Activated naive CD4-positive, alpha-beta T cell treated with anti-CD3 and anti-CD28 coated beads for 36 hours (primary cell): ENCODE measurements at regions of chrX and their contacts with region 1.

Region 1: GRCh38 chrX:24682739-24683432 is 10.8 kb upstream of the POLA1 start:
- DNase-seq: peak; percentile 72
- H3K4me3 Mint-ChIP-seq: no peak overlapping the region
- H3K27ac Mint-ChIP-seq: peak overlapping the region; percentile 59
- H3K4me1 Mint-ChIP-seq: peaks cover 19% of the 10 kb centered on the region
- H3K27me3 Mint-ChIP-seq: peaks cover 6% of the 10 kb centered on the region

Region 2: GRCh38 chrX:24693453-24694202 is 10.7 kb after region 1 on chrX and contains the start of gene POLA1:
- CTCF ChIA-PET with region 1: no interaction called
- intact Hi-C with region 1: loop called (anchors 1 kb)
- DNase-seq: peak; percentile 81
- H3K4me3 Mint-ChIP-seq: peak within 1 kb of the TSS; percentile 90
- H3K27ac Mint-ChIP-seq: peak within 1 kb of the TSS; percentile 88
- H3K4me1 Mint-ChIP-seq: peaks cover 17% of the 10 kb centered on the region
- H3K27me3 Mint-ChIP-seq: no peaks in the 10 kb centered on the region
- total RNA-seq, gene POLA1: 38.2 to 38.7 TPM

Region 3: DNA sequence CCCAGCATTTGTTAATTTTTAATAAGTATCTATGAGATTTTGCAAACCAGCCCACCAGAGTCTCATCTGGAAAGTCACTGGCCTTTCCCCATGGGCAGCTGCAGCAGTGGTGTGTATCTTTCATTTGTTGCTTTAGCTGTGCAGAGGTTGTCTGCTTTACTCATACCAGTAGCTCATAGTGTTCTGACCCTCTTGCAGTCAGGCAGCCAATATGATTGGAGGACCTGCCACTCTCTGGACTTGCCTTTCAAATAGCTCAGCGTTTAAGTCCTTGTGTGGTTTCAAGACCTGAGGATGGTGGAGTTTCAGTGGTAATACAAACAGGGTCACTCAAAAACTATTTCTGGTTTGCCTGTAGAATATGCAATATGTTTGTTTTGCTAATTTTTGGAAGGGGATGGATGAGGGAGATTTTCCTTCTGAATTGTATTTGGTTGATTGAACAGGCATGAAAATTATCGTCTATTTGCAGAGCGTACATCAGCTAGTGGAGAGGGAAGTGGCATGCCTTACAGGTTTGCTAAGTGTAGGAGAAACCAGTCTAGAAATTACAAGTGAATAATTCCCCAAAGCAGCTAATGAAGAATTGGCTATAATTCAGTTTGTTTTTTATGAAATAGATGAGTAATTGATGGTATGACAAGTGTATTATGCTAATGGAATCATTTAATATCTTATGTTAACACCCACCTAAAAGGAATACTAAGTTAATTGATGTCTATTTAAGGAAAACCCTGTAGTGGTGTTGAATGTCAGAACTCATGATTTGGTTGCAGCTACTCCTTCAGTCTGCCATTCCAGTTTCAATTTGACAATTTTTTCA is 19.7 kb after region 1 on chrX:
- CTCF ChIA-PET with region 1: no interaction called
- intact Hi-C with region 1: loop called (anchors 2 kb)
- DNase-seq: no peak
- H3K4me3 Mint-ChIP-seq: no peak overlapping the region
- H3K27ac Mint-ChIP-seq: peak overlapping the region; percentile 81
- H3K4me1 Mint-ChIP-seq: peaks cover 16% of the 10 kb centered on the region
- H3K27me3 Mint-ChIP-seq: no peaks in the 10 kb centered on the region

Region 4: DNA sequence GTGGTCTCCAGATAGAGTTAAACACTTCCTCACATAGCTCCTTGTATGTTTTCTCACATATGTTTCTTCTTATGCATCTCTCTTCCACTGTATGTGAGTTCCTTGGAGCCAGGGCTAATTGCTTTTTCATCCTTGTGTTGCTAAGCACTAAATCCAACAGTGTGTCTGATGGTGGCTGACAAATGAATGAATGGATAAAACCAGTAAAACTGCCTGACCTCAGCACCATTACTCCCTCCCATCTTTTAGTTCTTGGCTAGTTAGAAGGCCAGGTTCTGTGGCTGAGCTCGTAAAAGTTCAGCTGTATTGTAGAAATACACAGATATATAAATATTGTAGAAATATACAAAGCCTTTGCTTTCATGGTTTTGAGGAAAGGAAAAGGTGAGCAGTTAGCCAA is 282.5 kb after region 1 on chrX:
- CTCF ChIA-PET with region 1: no interaction called
- intact Hi-C with region 1: no loop called
- DNase-seq: no peak
- H3K4me3 Mint-ChIP-seq: no peak overlapping the region
- H3K27ac Mint-ChIP-seq: no peak overlapping the region
- H3K4me1 Mint-ChIP-seq: no peaks in the 10 kb centered on the region
- H3K27me3 Mint-ChIP-seq: no peaks in the 10 kb centered on the region